Natural killer cell (primary cell): ENCODE measurements at regions of chr11 and their contacts with region 1.

Region 1: GRCh38 chr11:128290106-128290840 is 297.1 kb downstream of the ETS1 start:
- DNase-seq: peak; percentile 62 to 95
- ATAC-seq: peak; percentile 79 to 90 (median 85)
- H3K4me3 ChIP-seq: peak overlapping the region; percentile 31
- H3K4me3 Mint-ChIP-seq: peak overlapping the region; percentile 94
- H3K27ac ChIP-seq: peak overlapping the region; percentile 97
- H3K27ac Mint-ChIP-seq: peak overlapping the region; percentile 98 to 99
- H3K4me1 ChIP-seq: peaks cover 37% of the 10 kb centered on the region
- H3K4me1 Mint-ChIP-seq: peaks cover 84 to 90% of the 10 kb centered on the region in 2 donors
- H3K27me3 ChIP-seq: no peaks in the 10 kb centered on the region
- H3K27me3 Mint-ChIP-seq: no peaks in the 10 kb centered on the region
- CTCF ChIP-seq: peak; percentile 87

Region 2: GRCh38 chr11:127766734-127767133 is 523.5 kb before region 1 on chr11:
- intact Hi-C with region 1: no loop called
- DNase-seq: no peak
- ATAC-seq: no peak
- H3K4me3 ChIP-seq: no peak overlapping the region
- H3K4me3 Mint-ChIP-seq: no peak overlapping the region
- H3K27ac ChIP-seq: no peak overlapping the region
- H3K27ac Mint-ChIP-seq: no peak overlapping the region
- H3K4me1 ChIP-seq: no peaks in the 10 kb centered on the region
- H3K4me1 Mint-ChIP-seq: no peaks in the 10 kb centered on the region
- H3K27me3 ChIP-seq: no peaks in the 10 kb centered on the region
- H3K27me3 Mint-ChIP-seq: peaks cover 0 to 5% of the 10 kb centered on the region in 2 donors
- CTCF ChIP-seq: no peak

Region 3: DNA sequence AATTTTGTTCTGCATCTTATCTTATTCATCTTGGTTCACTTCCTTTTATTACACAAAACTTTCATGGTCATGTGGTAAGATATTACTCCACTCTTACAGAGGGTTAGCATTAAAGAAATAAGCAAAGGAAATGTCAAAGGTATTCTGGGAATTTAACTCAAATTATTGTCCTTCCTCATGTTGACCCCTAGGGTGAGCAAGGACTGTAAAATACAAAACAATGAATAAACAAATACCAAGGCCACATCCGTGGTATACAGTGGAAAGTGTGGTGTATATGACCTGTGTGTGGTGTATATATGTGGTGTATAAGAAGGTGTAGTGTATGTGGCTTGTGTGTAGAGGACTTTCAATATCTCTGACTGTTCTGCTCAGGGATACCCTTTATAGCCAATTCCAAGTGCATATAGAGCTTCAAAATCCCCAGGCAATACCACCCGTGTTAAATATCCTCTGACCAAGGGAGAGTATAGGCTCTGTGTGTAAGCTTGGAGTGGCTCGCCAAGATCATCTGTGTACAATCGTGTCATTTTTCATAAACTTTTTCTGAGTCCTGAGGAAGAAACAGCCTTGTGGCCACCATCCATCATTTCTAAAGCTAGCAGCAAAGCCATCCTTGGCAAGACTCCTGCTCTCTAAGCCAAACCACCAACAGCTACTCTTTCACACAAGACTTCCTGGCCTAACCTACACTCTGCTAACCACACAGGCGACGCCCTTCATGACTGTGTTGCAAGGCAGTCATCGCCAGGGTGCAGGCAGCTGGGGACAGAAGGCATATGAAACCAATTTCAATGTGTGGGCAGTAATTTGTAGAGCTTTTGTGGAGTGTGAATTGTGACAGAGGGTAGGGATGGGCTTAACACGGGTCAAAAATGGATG is 250.9 kb before region 1 on chr11:
- intact Hi-C with region 1: loop called (anchors 5 kb)
- DNase-seq: peak; percentile 63 to 91
- ATAC-seq: peak; percentile 84 to 93 (median 92)
- H3K4me3 ChIP-seq: peak overlapping the region; percentile 7
- H3K4me3 Mint-ChIP-seq: peak overlapping the region; percentile 84
- H3K27ac ChIP-seq: peak overlapping the region; percentile 78
- H3K27ac Mint-ChIP-seq: peak overlapping the region; percentile 82 to 89
- H3K4me1 ChIP-seq: peaks cover 63% of the 10 kb centered on the region
- H3K4me1 Mint-ChIP-seq: peaks cover 34 to 49% of the 10 kb centered on the region in 2 donors
- H3K27me3 ChIP-seq: no peaks in the 10 kb centered on the region
- H3K27me3 Mint-ChIP-seq: no peaks in the 10 kb centered on the region
- CTCF ChIP-seq: peak; percentile 44

Region 4: DNA sequence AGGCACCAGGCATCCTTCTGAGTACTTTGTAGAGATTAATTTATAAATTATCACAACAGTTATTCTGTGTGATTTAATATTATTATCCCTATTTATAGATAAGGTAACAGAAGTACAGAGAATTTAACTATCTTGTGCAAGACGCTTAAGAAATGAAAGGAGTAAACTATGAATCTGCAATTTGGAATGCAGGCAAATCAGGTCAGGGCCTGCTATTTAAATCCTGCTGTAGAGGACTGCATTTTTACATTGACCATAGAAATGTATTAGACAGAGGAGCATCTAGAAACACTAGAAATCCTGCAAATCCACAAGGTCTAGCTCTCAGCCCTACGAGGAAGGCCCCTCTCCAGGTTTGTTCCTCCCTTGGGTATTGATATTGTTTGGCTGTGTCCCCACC is 39.1 kb before region 1 on chr11:
- intact Hi-C with region 1: no loop called
- DNase-seq: no peak
- ATAC-seq: no peak
- H3K4me3 ChIP-seq: no peak overlapping the region
- H3K4me3 Mint-ChIP-seq: no peak overlapping the region
- H3K27ac ChIP-seq: no peak overlapping the region
- H3K27ac Mint-ChIP-seq: no peak overlapping the region
- H3K4me1 ChIP-seq: no peaks in the 10 kb centered on the region
- H3K4me1 Mint-ChIP-seq: no peaks in the 10 kb centered on the region
- H3K27me3 ChIP-seq: no peaks in the 10 kb centered on the region
- H3K27me3 Mint-ChIP-seq: no peaks in the 10 kb centered on the region
- CTCF ChIP-seq: no peak

Region 5: DNA sequence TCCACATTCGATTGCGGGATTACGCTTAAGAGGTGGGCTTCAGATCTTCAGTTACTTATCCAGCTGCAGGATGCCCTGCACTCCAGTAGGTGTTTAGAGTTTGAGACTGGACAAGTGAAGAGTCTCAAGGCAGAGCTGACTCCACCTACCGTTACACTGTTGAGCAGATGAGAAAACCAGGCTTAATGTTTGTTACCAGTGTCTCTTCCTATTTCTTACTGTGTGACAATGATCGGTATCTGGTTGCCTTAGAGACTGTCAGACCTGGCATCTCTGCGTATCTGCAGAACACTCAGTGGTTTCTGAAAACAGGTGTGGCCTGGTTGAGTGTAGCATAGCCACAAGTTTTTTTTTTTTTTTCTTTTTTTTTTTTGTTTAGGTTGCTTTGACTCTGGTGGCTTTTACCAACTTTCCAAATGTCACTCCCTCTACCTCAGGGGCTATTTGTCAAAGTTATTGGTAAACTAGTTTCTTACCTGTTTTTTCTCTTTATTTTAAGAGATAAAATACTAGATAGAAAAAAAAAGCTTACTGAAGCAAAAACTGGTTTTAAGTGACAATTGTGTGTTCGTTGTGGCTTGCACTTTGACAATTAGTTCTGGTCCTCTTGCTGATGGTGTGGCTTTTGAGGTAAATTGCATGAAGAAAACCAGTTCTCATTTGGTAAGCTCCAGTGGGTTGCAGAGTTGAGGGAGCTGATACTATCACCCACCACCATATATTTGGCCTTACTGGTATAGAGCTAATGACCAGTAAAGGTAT is 12.3 kb after region 1 on chr11:
- intact Hi-C with region 1: loop called (anchors 1 kb)
- DNase-seq: peak; percentile 51 to 95
- ATAC-seq: peak; percentile 81 to 95 (median 88)
- H3K4me3 ChIP-seq: peak overlapping the region; percentile 20
- H3K4me3 Mint-ChIP-seq: peak overlapping the region; percentile 87
- H3K27ac ChIP-seq: peak overlapping the region; percentile 88
- H3K27ac Mint-ChIP-seq: peak overlapping the region; percentile 96 to 99
- H3K4me1 ChIP-seq: peaks cover 52% of the 10 kb centered on the region
- H3K4me1 Mint-ChIP-seq: peaks cover 85 to 89% of the 10 kb centered on the region in 2 donors
- H3K27me3 ChIP-seq: no peaks in the 10 kb centered on the region
- H3K27me3 Mint-ChIP-seq: no peaks in the 10 kb centered on the region
- CTCF ChIP-seq: peak; percentile 23

Region 6: GRCh38 chr11:128428935-128429334 is 138.7 kb after region 1 on chr11:
- intact Hi-C with region 1: no loop called
- DNase-seq: no peak
- ATAC-seq: no peak
- H3K4me3 ChIP-seq: no peak overlapping the region
- H3K4me3 Mint-ChIP-seq: no peak overlapping the region
- H3K27ac ChIP-seq: no peak overlapping the region
- H3K27ac Mint-ChIP-seq: no peak overlapping the region
- H3K4me1 ChIP-seq: peaks cover 12% of the 10 kb centered on the region
- H3K4me1 Mint-ChIP-seq: peaks cover 14 to 18% of the 10 kb centered on the region in 2 donors
- H3K27me3 ChIP-seq: no peaks in the 10 kb centered on the region
- H3K27me3 Mint-ChIP-seq: no peaks in the 10 kb centered on the region
- CTCF ChIP-seq: no peak

Region 7: DNA sequence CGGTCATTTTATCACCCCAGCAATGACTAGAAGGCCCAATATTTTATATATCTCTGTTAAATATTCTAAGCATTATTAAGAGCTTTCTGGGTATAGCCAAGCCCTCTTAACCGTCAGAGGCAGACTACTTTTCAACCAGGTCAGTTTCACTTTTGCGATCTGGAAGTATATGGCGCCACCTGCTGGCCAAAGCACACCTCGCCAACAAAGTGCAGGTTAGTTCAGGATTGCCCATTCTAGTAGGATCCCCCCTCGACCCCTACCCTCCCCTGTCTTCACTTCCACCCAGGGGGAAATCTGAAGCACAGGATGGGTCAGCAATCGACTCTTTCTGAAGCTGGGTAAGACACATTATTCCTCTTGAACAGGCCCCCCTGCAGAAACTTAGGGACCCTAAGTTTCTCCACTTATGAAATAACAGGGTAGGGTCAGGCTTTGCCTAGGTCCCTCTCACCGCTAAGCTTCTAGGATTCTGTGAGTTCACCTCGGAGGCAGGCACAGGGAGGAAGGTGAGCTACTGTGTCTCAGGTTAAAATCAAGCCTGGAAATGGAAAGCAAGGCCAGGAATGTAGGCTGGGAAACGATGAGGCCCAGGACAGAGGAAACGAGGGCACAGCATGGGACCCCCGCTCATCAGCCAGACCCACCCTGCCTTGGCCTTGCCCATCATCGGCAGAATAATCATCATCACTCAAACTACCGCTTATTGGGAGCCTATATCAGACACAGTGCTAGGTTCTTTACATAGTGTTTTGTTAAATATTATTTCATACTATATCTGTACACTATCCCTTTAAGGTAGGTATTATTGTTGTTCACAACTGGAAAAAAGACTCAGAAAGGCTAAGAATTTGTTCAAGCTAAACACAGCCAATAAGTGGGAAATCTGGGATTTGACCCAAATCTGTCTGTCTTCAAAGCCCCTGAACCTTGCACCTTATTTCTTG is 541.2 kb after region 1 on chr11:
- intact Hi-C with region 1: loop called (anchors 10 kb)
- DNase-seq: peak; percentile 82 to 94
- ATAC-seq: peak; percentile 86 to 90 (median 88)
- H3K4me3 ChIP-seq: peak overlapping the region; percentile 13
- H3K4me3 Mint-ChIP-seq: peak overlapping the region; percentile 84
- H3K27ac ChIP-seq: peak overlapping the region; percentile 70
- H3K27ac Mint-ChIP-seq: peak overlapping the region; percentile 87 to 88
- H3K4me1 ChIP-seq: peaks cover 16% of the 10 kb centered on the region
- H3K4me1 Mint-ChIP-seq: peaks cover 25 to 36% of the 10 kb centered on the region in 2 donors
- H3K27me3 ChIP-seq: no peaks in the 10 kb centered on the region
- H3K27me3 Mint-ChIP-seq: no peaks in the 10 kb centered on the region
- CTCF ChIP-seq: peak; percentile 95